Heart left ventricle (tissue), 16 donors: ENCODE measurements at regions of chr14 and their contacts with region 1.

Region 1: DNA sequence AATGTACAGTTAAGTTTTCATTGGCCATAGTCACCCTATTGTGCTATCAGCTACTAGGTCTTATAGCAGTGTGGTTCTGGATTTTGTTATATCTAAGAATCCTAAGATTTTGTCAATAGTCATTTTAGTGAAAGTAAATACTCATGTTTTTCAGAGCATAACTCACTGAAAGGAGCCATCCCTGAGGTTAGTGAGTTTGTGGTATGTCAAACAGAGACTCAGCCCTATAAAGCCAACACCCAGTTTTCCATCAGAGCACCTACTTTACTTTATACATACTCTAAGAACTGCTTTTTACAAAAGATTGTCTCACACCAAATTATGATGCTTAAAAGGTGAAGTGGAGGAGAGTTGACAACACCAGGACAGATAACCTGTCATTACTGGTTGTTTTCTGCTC is 686.3 kb upstream of the LRFN5 start:
- DNase-seq: no peak
- ATAC-seq: no peak
- H3K4me3 ChIP-seq: no peak overlapping the region
- H3K27ac ChIP-seq: no peak overlapping the region
- H3K4me1 ChIP-seq: no peaks in the 10 kb centered on the region
- H3K27me3 ChIP-seq: no peaks in the 10 kb centered on the region
- CTCF ChIP-seq: no peak
- POLR2A ChIP-seq: no peak

Region 2: GRCh38 chr14:40887912-40888311 is 32.5 kb before region 1 on chr14:
- intact Hi-C with region 1: loop called in 1 of 10 experiments (anchors 2 kb)
- DNase-seq: no peak
- ATAC-seq: no peak
- H3K4me3 ChIP-seq: no peak overlapping the region
- H3K27ac ChIP-seq: no peak overlapping the region
- H3K4me1 ChIP-seq: no peaks in the 10 kb centered on the region
- H3K27me3 ChIP-seq: no peaks in the 10 kb centered on the region
- CTCF ChIP-seq: no peak
- POLR2A ChIP-seq: no peak